ENCODE measurements at regions of chr10 and their contacts with region 1.

Region 1: GRCh38 chr10:44993931-44994747 is 6.6 kb upstream of the ZNF22 start:
- DNase-seq: peak in 1 of 2 experiments; percentile 59
- H3K4me3 ChIP-seq: no peak overlapping the region
- H3K27ac ChIP-seq: peak overlapping the region; percentile 84
- H3K4me1 ChIP-seq: peaks cover 46% of the 10 kb centered on the region
- H3K27me3 ChIP-seq: no peaks in the 10 kb centered on the region
- CTCF ChIP-seq: no peak

Region 2: DNA sequence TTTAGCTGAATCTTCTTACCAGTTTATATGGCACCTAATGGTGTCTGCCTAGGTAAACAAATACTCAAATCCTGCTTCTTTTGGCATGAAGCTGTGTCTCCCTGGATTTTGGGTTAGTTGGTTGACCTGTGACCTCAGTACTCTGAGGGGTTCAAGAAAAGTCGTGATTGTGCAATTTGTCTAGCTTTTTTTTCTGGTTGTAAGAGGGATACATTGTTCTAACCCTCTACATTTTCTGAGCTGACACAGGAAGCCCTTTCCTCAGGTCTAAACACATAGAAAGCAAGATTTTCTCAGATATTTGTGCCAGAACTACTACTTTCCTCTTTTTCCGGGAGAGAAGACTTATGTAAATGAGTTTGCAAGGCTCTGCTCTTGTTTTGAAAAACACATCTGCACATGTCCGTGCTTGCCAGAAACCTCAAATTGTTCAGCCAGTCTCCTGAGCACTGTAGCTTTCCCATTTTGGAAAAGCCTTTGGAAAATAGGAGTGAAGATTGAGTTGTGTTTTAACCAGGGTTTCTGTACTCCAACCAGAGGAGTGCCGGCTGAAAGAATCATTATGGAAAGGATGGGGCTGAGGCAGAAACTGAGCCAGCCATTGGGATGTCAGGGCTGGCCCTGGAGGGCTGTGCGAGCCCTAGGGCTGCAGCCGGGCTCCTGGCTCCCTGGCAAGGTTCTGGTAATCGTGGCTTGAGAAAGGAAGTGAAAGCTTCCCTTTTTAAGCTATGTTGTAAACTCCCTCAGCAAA is 577.9 kb before region 1 on chr10:
- CTCF ChIA-PET with region 1: no interaction called
- POLR2A ChIA-PET with region 1: no interaction called
- intact Hi-C with region 1: no loop called
- DNase-seq: peak in 1 of 2 experiments; percentile 11
- H3K4me3 ChIP-seq: no peak overlapping the region
- H3K27ac ChIP-seq: no peak overlapping the region
- H3K4me1 ChIP-seq: no peaks in the 10 kb centered on the region
- H3K27me3 ChIP-seq: peaks cover 34% of the 10 kb centered on the region
- CTCF ChIP-seq: no peak

Region 3: DNA sequence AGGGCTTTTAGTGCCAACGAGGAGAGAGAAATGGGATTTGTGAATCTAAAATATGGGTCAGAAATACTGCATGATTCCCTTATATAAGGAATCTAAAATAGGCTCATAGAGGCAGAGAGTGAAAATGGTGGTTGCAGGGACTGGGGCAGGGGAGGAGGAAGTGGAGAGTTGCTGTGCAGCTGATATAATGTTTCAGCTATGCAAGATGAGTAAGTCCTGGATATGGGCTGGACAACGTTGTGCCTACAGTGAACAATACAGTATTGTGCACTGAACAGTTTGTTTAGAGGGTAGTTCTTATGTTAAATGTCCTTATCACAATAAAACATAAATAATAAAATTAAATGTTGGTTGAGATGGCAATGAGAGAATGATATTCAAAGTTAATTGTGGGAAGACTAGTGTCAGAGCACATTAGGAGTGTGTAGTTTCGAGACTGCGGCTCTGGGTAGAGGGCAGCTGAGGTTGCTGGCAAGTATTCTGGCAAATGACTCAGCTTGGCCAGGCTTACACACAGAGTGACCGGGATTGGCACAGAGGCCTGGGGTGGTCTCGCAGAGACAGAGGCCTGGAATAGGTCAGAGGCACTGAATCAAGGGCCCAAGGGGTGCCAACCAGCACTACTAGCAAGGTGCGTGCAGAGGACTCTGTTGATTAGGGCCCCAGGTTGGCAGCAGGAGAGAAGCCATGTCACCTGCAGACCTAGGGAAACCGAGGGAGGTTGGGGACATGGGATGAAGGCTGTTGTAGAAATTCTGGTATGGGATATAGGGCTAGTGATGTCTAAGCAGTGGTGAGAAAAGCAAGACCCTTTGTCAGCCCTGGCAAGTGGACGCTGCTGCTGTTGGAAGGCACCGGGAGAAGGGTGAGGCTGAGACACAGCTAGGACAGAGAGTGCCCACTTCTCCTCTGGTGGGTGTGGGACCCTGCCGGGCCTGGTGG is 12.7 kb before region 1 on chr10:
- CTCF ChIA-PET with region 1: interaction called, 5 read pairs
- POLR2A ChIA-PET with region 1: interaction called, 10 read pairs
- intact Hi-C with region 1: loop called (anchors 1 kb)
- DNase-seq: peak; percentile 65 to 91
- H3K4me3 ChIP-seq: peak overlapping the region; percentile 30; the same call in 1 of the 2 replicates
- H3K27ac ChIP-seq: peak overlapping the region; percentile 92
- H3K4me1 ChIP-seq: peaks cover 67% of the 10 kb centered on the region
- H3K27me3 ChIP-seq: no peaks in the 10 kb centered on the region
- CTCF ChIP-seq: no peak

Measured in PC-9 (cell line).